B cell (primary cell): ENCODE measurements at regions of chr9 and their contacts with region 1.

Region 1: GRCh38 chr9:68637020-68637419 is 68.0 kb upstream of the PIP5K1B start:
- DNase-seq: no peak
- ATAC-seq: no peak
- H3K4me3 ChIP-seq: peak overlapping the region in 1 of 5 experiments; percentile 4
- H3K4me3 Mint-ChIP-seq: peak overlapping the region; percentile 32
- H3K27ac ChIP-seq: peak overlapping the region; percentile 51 to 58
- H3K27ac Mint-ChIP-seq: peak overlapping the region; percentile 71
- H3K4me1 ChIP-seq: peaks cover 73 to 76% of the 10 kb centered on the region in 2 donors
- H3K4me1 Mint-ChIP-seq: peaks cover 71% of the 10 kb centered on the region
- H3K27me3 ChIP-seq: no peaks in the 10 kb centered on the region
- H3K27me3 Mint-ChIP-seq: no peaks in the 10 kb centered on the region
- CTCF ChIP-seq: no peak

Region 2: GRCh38 chr9:68595868-68596267 is 41.2 kb before region 1 on chr9:
- CTCF ChIA-PET with region 1: interaction called, 6 read pairs
- POLR2A ChIA-PET with region 1: interaction called, 4 read pairs
- intact Hi-C with region 1: loop called (anchors 5 kb)
- DNase-seq: no peak
- ATAC-seq: no peak
- H3K4me3 ChIP-seq: no peak overlapping the region
- H3K4me3 Mint-ChIP-seq: no peak overlapping the region
- H3K27ac ChIP-seq: no peak overlapping the region
- H3K27ac Mint-ChIP-seq: peak overlapping the region; percentile 10
- H3K4me1 ChIP-seq: peaks cover 47 to 51% of the 10 kb centered on the region in 2 donors
- H3K4me1 Mint-ChIP-seq: peaks cover 51% of the 10 kb centered on the region
- H3K27me3 ChIP-seq: no peaks in the 10 kb centered on the region
- H3K27me3 Mint-ChIP-seq: no peaks in the 10 kb centered on the region
- CTCF ChIP-seq: no peak

Region 3: DNA sequence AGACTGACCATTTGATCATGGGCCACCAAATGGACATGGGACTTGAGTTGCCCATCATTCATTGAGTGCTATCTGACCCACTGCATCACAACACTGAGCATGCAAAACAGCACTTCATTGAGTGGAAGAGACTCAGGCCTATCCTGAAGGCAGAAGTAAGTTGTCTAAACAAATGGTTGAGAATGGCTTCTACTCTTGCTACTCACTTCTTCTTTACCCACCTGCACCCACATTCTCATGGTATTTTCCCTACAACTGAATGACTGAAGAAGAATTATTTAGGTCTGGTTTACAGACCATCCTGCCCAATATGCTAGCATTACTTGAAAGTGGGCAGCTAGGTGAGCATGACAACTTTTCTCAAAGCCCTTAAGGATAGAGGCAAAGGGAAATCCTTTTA is 27.0 kb after region 1 on chr9:
- CTCF ChIA-PET with region 1: no interaction called
- POLR2A ChIA-PET with region 1: no interaction called
- intact Hi-C with region 1: no loop called
- DNase-seq: no peak
- ATAC-seq: no peak
- H3K4me3 ChIP-seq: no peak overlapping the region
- H3K4me3 Mint-ChIP-seq: no peak overlapping the region
- H3K27ac ChIP-seq: no peak overlapping the region
- H3K27ac Mint-ChIP-seq: peak overlapping the region; percentile 42
- H3K4me1 ChIP-seq: peaks cover 0 to 6% of the 10 kb centered on the region in 2 donors
- H3K4me1 Mint-ChIP-seq: peaks cover 9% of the 10 kb centered on the region
- H3K27me3 ChIP-seq: no peaks in the 10 kb centered on the region
- H3K27me3 Mint-ChIP-seq: no peaks in the 10 kb centered on the region
- CTCF ChIP-seq: no peak

Region 4: DNA sequence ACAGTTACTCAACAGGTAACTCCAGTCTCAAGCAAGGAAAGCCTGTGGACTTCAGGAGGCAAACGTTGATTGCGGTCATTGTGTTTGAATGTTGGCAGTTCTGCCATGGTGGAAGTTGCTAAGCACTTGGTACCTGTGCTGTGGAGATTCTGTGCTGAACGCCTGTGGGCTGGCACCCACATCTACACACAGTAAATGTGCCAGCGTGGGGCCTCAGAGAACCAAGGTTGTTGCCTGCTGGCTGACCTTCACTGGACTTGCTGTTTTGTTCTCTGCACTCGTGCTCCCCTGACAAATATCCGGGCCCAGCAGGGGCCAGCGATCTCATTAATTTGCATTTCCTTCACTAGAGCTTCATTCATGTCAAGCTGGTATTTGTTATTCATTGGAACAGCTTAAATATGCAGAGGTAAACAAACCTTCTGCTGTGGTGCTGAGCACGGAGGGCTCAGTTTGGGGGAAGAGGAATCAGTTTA is 235.0 kb after region 1 on chr9:
- CTCF ChIA-PET with region 1: no interaction called
- POLR2A ChIA-PET with region 1: no interaction called
- intact Hi-C with region 1: no loop called
- DNase-seq: no peak
- ATAC-seq: no peak
- H3K4me3 ChIP-seq: no peak overlapping the region
- H3K4me3 Mint-ChIP-seq: no peak overlapping the region
- H3K27ac ChIP-seq: no peak overlapping the region
- H3K27ac Mint-ChIP-seq: no peak overlapping the region
- H3K4me1 ChIP-seq: no peaks in the 10 kb centered on the region
- H3K4me1 Mint-ChIP-seq: no peaks in the 10 kb centered on the region
- H3K27me3 ChIP-seq: no peaks in the 10 kb centered on the region
- H3K27me3 Mint-ChIP-seq: no peaks in the 10 kb centered on the region
- CTCF ChIP-seq: no peak